Panc1 (cell line): ENCODE measurements at regions of chrX and their contacts with region 1.

Region 1: GRCh38 chrX:154452823-154453222 is 5.3 kb upstream of the PLXNA3 start:
- DNase-seq: no peak
- ATAC-seq: no peak
- H3K4me3 ChIP-seq: no peak overlapping the region
- H3K27ac ChIP-seq: no peak overlapping the region
- H3K4me1 ChIP-seq: no peaks in the 10 kb centered on the region
- H3K27me3 ChIP-seq: no peaks in the 10 kb centered on the region
- CTCF ChIP-seq: no peak

Region 2: DNA sequence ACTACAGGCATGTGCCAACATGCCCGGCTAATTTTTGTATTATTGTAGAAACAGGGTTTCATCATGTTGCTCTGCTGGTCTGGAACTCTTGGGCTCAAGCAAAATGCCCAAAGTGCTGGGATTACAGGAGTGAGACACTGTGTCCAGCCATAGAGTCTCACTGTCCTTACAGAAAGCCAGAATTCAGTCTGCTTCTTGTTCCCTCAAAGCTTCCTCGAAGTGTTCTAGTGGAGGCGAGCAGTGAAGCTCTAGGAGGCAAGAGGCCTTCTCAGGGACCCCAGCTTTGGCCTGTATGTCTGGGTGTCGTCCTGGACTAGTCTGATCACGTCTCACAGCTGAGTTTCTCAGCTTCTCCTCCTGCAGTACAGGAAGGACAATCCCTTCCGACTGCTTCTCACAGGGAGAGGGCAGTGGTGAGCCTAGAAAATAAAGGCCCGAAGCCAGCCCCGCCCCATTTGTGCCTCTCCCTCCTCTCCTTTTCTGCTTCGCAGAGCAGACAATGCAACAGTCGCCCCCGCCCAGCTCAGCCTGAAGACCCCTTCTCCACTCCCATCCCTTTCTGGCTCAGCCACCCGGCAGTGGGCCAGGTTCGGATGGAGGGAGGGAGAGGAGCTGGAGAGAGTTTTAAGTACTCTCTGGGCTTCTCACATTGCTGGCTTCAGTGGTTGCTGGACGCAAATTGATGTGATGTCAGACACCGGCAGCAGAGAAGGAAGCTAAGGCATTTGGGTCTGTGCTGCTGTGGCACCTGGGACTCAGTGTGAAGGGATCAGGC is 74.3 kb after region 1 on chrX:
- CTCF ChIA-PET with region 1: no interaction called
- POLR2A ChIA-PET with region 1: interaction called, 13 read pairs
- in situ Hi-C with region 1: no loop called
- intact Hi-C with region 1: no loop called
- DNase-seq: no peak
- ATAC-seq: peak; percentile 87
- H3K4me3 ChIP-seq: peak overlapping the region; percentile 24 to 60
- H3K27ac ChIP-seq: peak overlapping the region; percentile 81
- H3K4me1 ChIP-seq: peaks cover 12% of the 10 kb centered on the region
- H3K27me3 ChIP-seq: no peaks in the 10 kb centered on the region
- CTCF ChIP-seq: no peak

Region 3: DNA sequence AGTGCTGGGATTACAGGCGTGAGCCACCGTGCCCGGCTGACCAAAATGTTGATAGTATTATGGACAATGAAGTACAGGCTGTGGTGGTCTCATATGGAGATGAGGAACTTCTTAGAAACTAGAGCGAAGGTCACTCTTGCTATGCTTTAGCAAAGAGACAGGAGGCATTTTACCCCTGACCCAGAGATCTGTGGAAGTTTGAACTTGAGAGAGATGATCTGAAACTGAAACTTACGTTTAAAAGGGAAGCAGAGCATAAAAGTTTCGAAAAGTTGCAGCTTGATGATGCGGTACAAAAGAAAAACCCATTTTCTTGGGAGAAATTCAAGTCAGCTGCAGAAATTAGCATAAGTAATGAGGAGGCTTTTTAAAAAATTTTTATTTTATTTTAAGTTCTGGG is 209.1 kb after region 1 on chrX:
- CTCF ChIA-PET with region 1: no interaction called
- POLR2A ChIA-PET with region 1: no interaction called
- in situ Hi-C with region 1: no loop called
- intact Hi-C with region 1: no loop called
- DNase-seq: no peak
- ATAC-seq: no peak
- H3K4me3 ChIP-seq: no peak overlapping the region
- H3K27ac ChIP-seq: no peak overlapping the region
- H3K4me1 ChIP-seq: no peaks in the 10 kb centered on the region
- H3K27me3 ChIP-seq: no peaks in the 10 kb centered on the region
- CTCF ChIP-seq: no peak